Heart left ventricle (tissue), 16 donors: ENCODE measurements at regions of chr3 and their contacts with region 1.

Region 1: DNA sequence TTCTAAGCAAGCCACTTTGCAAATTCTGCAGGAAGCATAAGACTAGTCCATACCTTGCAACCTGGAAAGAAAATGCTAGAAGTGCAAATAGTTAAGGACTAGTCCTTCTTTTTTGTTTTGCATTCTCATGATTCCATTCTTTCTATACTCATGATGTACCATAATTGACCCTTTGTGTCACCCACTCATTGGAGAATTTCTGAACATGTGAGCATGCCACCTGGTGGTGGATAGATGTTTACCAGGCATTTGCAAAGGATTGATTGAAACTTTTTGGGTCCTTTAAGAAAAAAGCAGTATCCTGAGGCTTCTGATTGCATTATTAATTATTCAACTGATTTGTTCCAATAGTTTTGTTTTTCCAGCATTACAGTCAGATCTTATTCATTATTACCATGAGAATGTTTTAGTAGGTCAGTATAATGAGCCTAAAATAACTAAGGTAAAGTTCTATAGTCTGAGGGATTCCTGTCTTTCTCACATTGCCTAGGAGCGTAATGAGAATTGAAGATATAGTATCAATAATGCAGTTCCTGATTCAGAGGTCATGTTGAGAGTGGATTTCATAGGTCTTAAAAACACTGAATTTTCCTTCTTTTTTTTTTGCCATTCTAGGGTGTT is 20.2 kb upstream of the DIPK2A start:
- DNase-seq: peak in 1 of 5 donors; percentile 8
- ATAC-seq: no peak
- H3K4me3 ChIP-seq: no peak overlapping the region
- H3K27ac ChIP-seq: no peak overlapping the region
- H3K4me1 ChIP-seq: no peaks in the 10 kb centered on the region
- H3K27me3 ChIP-seq: no peaks in the 10 kb centered on the region
- CTCF ChIP-seq: peak; percentile 45 to 70 (median 54)
- POLR2A ChIP-seq: no peak

Region 2: GRCh38 chr3:143329567-143330211 is 621.8 kb before region 1 on chr3:
- intact Hi-C with region 1: no loop called
- DNase-seq: peak in 2 of 5 donors; percentile 32 to 59
- ATAC-seq: peak in 3 of 4 donors; percentile 42 to 73 (median 49)
- H3K4me3 ChIP-seq: no peak overlapping the region
- H3K27ac ChIP-seq: no peak overlapping the region
- H3K4me1 ChIP-seq: peaks cover 0 to 43% (median 13%) of the 10 kb centered on the region in 12 donors
- H3K27me3 ChIP-seq: no peaks in the 10 kb centered on the region
- CTCF ChIP-seq: no peak
- POLR2A ChIP-seq: no peak

Region 3: DNA sequence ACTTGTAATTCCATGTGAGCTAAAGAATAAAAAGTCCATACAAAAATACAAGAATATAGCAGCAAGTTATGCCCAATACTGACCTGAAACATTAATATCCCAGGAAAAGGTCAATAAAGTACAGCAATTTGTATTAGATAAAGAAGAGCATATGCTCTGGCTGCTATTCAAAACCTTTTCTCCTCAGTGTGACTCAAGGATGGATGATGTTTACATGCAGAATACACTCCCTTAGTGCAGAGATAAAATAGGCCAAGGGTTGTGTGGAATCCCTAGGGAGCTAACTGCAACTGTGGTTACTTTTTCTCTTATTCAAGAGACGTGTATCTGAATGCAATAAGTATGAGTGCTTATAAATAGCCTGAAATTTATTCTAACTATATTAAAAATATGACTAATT is 181.8 kb before region 1 on chr3:
- intact Hi-C with region 1: loop called in 1 of 10 experiments (anchors 5 kb)
- DNase-seq: no peak
- ATAC-seq: peak in 1 of 4 donors; percentile 26
- H3K4me3 ChIP-seq: no peak overlapping the region
- H3K27ac ChIP-seq: peak overlapping the region in 1 of 12 donors; percentile 48
- H3K4me1 ChIP-seq: peaks cover 0 to 12% (median 2%) of the 10 kb centered on the region in 12 donors
- H3K27me3 ChIP-seq: no peaks in the 10 kb centered on the region
- CTCF ChIP-seq: no peak
- POLR2A ChIP-seq: no peak

Region 4: GRCh38 chr3:143775459-143775858 is 176.0 kb before region 1 on chr3:
- intact Hi-C with region 1: loop called in 8 of 10 experiments (anchors 5 to 10 kb)
- DNase-seq: no peak
- ATAC-seq: peak in 3 of 4 donors; percentile 55 to 75 (median 69)
- H3K4me3 ChIP-seq: peak overlapping the region in 6 of 12 donors; percentile 1 to 42 (median 16)
- H3K27ac ChIP-seq: no peak overlapping the region
- H3K4me1 ChIP-seq: peaks cover 0 to 16% (median 0%) of the 10 kb centered on the region in 12 donors
- H3K27me3 ChIP-seq: no peaks in the 10 kb centered on the region
- CTCF ChIP-seq: peak; percentile 19 to 73 (median 52)
- POLR2A ChIP-seq: no peak

Region 5: GRCh38 chr3:143786219-143787191 is 165.0 kb before region 1 on chr3:
- intact Hi-C with region 1: loop called in 1 of 10 experiments (anchors 10 kb)
- DNase-seq: peak in 1 of 5 donors; percentile 38
- ATAC-seq: peak in 3 of 4 donors; percentile 36 to 61 (median 48)
- H3K4me3 ChIP-seq: peak overlapping the region in 5 of 12 donors; percentile 1 to 33 (median 28)
- H3K27ac ChIP-seq: peak overlapping the region in 7 of 12 donors; percentile 30 to 44 (median 38)
- H3K4me1 ChIP-seq: peaks cover 0 to 15% (median 3%) of the 10 kb centered on the region in 12 donors
- H3K27me3 ChIP-seq: no peaks in the 10 kb centered on the region
- CTCF ChIP-seq: no peak
- POLR2A ChIP-seq: no peak